WTC11 (cell line): ENCODE measurements at regions of chr12 and their contacts with region 1.

Region 1: DNA sequence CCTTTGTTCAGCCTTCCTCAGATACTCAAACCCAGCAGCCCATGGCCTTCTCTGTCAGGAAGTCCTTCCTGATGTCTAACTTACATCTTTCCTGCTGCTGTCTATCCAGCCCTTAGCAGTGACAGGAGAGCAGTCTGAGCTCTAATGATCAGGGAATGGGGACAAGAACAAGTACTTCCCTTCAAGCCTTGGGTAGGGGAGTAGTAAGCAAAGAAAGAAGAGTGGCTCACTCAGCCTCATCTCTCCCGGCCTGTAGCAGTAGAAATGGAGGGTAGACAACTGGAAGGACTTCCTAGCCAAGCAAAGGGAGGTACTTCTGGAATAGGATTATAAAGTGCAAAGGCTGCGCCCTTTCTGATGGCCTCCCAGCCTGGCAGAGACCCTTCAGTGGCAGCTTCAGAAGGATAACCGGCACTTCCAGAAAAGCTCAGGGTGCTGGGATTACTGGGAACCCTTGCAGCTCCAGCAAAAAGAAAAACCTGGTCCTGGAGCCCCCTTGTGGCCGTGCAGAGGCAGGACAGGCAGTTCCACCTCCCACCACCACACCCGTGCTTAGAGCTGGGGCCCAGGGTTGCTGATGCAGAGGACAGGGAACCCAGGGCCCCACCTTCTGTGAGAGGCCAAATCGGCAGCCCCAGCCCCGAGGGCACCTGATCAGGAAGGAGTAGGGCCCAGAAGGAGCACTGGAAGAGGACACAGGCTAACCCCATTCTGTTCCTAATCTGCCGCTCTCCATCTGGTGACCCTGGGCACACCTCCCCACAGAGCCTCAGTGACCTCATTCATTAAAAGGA is 12.4 kb upstream of the SMUG1 start:
- DNase-seq: peak; percentile 87
- ATAC-seq: peak; percentile 92
- H3K4me3 Mint-ChIP-seq: no peak overlapping the region
- H3K27ac Mint-ChIP-seq: no peak overlapping the region
- H3K4me1 Mint-ChIP-seq: peaks cover 16% of the 10 kb centered on the region
- H3K27me3 Mint-ChIP-seq: peaks cover 96% of the 10 kb centered on the region
- CTCF ChIP-seq: peak; percentile 93

Region 2: DNA sequence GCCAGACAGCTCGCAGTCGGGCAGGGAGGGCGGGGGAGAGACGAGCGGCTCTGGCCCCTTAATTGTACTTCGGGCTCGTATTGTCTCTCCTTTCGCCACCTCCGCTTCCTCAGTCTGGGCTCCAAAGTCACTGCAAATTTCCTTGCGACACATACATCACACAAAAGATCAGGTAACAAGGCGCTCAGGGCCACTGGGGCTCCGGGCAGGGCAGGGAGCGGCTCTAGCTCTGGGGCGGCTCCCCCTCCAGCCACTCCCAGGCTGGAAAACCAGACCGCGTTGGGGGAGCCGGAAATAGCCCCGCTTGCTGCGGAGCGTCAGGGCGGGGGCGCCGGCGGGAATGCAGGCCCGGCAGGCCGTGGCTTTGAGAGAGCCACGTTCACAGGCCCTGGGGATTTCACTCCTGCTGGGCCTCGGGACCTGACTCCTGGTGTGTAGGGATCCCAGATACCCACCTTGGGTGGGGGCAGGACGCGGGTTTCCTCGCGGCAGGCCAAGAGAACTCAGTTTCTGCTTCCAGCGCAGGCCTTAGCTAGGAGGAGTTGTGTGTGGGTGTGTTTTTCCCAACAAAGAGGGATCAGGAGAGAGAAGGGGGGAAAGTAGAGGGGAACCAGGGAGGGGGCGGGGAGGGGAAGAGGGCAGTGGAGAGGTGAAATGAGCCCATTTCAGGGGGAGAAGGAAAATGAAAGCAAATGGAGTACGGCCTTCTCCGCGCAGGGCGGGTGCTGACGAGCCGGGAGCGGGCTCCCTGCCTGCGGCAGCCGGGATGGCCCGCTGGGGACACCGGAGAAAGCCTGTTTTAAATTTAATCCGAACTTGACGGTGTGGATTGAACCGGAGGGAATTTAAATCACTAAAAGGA is 205.6 kb before region 1 on chr12:
- CTCF ChIA-PET with region 1: interaction called, 107 read pairs
- POLR2A ChIA-PET with region 1: no interaction called
- DNase-seq: peak; percentile 76
- ATAC-seq: peak; percentile 49
- H3K4me3 Mint-ChIP-seq: peak overlapping the region; percentile 56
- H3K27ac Mint-ChIP-seq: no peak overlapping the region
- H3K4me1 Mint-ChIP-seq: peaks cover 36% of the 10 kb centered on the region
- H3K27me3 Mint-ChIP-seq: peaks cover 100% of the 10 kb centered on the region
- CTCF ChIP-seq: no peak

Region 3: GRCh38 chr12:54024127-54024526 is 177.1 kb before region 1 on chr12:
- CTCF ChIA-PET with region 1: interaction called, 149 read pairs
- POLR2A ChIA-PET with region 1: interaction called, 4 read pairs
- DNase-seq: no peak
- ATAC-seq: peak; percentile 55
- H3K4me3 Mint-ChIP-seq: no peak overlapping the region
- H3K27ac Mint-ChIP-seq: no peak overlapping the region
- H3K4me1 Mint-ChIP-seq: peaks cover 24% of the 10 kb centered on the region
- H3K27me3 Mint-ChIP-seq: peaks cover 100% of the 10 kb centered on the region
- CTCF ChIP-seq: no peak

Region 4: GRCh38 chr12:54075974-54076373 is 125.2 kb before region 1 on chr12:
- CTCF ChIA-PET with region 1: interaction called, 16 read pairs
- POLR2A ChIA-PET with region 1: no interaction called
- DNase-seq: peak; percentile 64
- ATAC-seq: peak; percentile 98
- H3K4me3 Mint-ChIP-seq: peak overlapping the region; percentile 54
- H3K27ac Mint-ChIP-seq: peak overlapping the region; percentile 98
- H3K4me1 Mint-ChIP-seq: peaks cover 61% of the 10 kb centered on the region
- H3K27me3 Mint-ChIP-seq: peaks cover 87% of the 10 kb centered on the region
- CTCF ChIP-seq: no peak

Region 5: DNA sequence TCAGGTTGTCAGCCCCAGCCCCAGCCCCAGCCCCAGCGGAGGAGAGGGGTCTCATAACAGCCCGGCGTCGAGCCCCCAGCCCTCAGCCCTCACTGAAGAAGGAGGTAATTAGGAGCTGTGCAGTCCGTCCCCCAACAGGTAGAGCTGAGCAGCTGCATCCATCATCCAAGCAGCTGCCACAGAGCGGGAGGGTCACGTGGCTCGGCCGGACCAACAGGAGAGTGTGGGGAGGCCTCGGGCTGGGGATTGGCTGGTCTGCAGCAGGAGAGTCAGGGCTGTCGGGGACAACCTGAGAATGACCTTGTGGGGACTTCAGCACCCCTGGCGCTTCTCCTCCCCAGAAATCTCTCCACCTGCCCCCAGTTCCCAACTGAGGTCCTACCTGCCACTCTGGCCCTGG is 42.1 kb before region 1 on chr12:
- CTCF ChIA-PET with region 1: interaction called, 19 read pairs
- POLR2A ChIA-PET with region 1: no interaction called
- DNase-seq: peak; percentile 85
- ATAC-seq: peak; percentile 98
- H3K4me3 Mint-ChIP-seq: no peak overlapping the region
- H3K27ac Mint-ChIP-seq: no peak overlapping the region
- H3K4me1 Mint-ChIP-seq: peaks cover 57% of the 10 kb centered on the region
- H3K27me3 Mint-ChIP-seq: peaks cover 36% of the 10 kb centered on the region
- CTCF ChIP-seq: no peak

Region 6: GRCh38 chr12:54214553-54215406 is 13.6 kb after region 1 on chr12:
- CTCF ChIA-PET with region 1: interaction called, 55 read pairs
- POLR2A ChIA-PET with region 1: interaction called, 7 read pairs
- DNase-seq: peak; percentile 97
- ATAC-seq: peak; percentile 71
- H3K4me3 Mint-ChIP-seq: peak overlapping the region; percentile 16; the same call in 1 of the 2 replicates
- H3K27ac Mint-ChIP-seq: no peak overlapping the region
- H3K4me1 Mint-ChIP-seq: peaks cover 33% of the 10 kb centered on the region
- H3K27me3 Mint-ChIP-seq: peaks cover 79% of the 10 kb centered on the region
- CTCF ChIP-seq: peak; percentile 96

Region 7: GRCh38 chr12:54306925-54307741 is 105.9 kb after region 1 on chr12:
- CTCF ChIA-PET with region 1: no interaction called
- POLR2A ChIA-PET with region 1: no interaction called
- DNase-seq: peak; percentile 45
- ATAC-seq: peak; percentile 84
- H3K4me3 Mint-ChIP-seq: no peak overlapping the region
- H3K27ac Mint-ChIP-seq: no peak overlapping the region
- H3K4me1 Mint-ChIP-seq: peaks cover 31% of the 10 kb centered on the region
- H3K27me3 Mint-ChIP-seq: no peaks in the 10 kb centered on the region
- CTCF ChIP-seq: no peak

Region 8: GRCh38 chr12:55060470-55060869 is 859.3 kb after region 1 on chr12:
- CTCF ChIA-PET with region 1: no interaction called
- POLR2A ChIA-PET with region 1: no interaction called
- DNase-seq: no peak
- ATAC-seq: peak; percentile 65
- H3K4me3 Mint-ChIP-seq: no peak overlapping the region
- H3K27ac Mint-ChIP-seq: no peak overlapping the region
- H3K4me1 Mint-ChIP-seq: peaks cover 23% of the 10 kb centered on the region
- H3K27me3 Mint-ChIP-seq: no peaks in the 10 kb centered on the region
- CTCF ChIP-seq: no peak